ENCODE measurements at regions of chr2 and their contacts with region 1.

Region 1: GRCh38 chr2:8761529-8762164 is 75.8 kb downstream of the KIDINS220 start:
- DNase-seq: no peak
- H3K4me3 Mint-ChIP-seq: no peak overlapping the region
- H3K27ac Mint-ChIP-seq: no peak overlapping the region
- H3K4me1 Mint-ChIP-seq: peaks cover 3% of the 10 kb centered on the region
- H3K27me3 Mint-ChIP-seq: no peaks in the 10 kb centered on the region

Region 2: GRCh38 chr2:7097348-7097895 is 1664.2 kb before region 1 on chr2:
- intact Hi-C with region 1: loop called (anchors 5 kb)
- DNase-seq: peak; percentile 54
- H3K4me3 Mint-ChIP-seq: peak overlapping the region; percentile 33
- H3K27ac Mint-ChIP-seq: peak overlapping the region; percentile 0
- H3K4me1 Mint-ChIP-seq: peaks cover 8% of the 10 kb centered on the region
- H3K27me3 Mint-ChIP-seq: no peaks in the 10 kb centered on the region

Region 3: DNA sequence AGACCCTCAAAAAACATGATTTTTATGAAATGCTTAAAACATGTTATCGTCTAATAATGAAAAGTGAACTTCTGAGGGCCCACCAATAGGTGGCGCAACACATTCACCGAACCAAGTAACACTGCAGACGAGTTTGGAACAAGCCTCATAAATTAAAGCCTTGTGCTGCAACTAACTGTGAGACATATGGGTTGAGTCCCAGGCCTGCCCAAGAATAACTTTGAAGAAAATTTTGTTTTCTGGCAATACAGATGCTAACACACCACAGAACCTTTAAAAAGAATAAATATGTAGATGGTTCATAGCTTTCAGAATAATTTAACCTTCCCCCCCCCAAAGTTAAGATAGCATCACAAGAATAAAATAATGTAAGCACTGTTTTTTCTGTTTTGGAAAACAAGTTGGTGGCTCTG is 1558.6 kb before region 1 on chr2:
- intact Hi-C with region 1: loop called (anchors 5 kb)
- DNase-seq: peak; percentile 48
- H3K4me3 Mint-ChIP-seq: no peak overlapping the region
- H3K27ac Mint-ChIP-seq: no peak overlapping the region
- H3K4me1 Mint-ChIP-seq: peaks cover 7% of the 10 kb centered on the region
- H3K27me3 Mint-ChIP-seq: peaks cover 2% of the 10 kb centered on the region

Region 4: DNA sequence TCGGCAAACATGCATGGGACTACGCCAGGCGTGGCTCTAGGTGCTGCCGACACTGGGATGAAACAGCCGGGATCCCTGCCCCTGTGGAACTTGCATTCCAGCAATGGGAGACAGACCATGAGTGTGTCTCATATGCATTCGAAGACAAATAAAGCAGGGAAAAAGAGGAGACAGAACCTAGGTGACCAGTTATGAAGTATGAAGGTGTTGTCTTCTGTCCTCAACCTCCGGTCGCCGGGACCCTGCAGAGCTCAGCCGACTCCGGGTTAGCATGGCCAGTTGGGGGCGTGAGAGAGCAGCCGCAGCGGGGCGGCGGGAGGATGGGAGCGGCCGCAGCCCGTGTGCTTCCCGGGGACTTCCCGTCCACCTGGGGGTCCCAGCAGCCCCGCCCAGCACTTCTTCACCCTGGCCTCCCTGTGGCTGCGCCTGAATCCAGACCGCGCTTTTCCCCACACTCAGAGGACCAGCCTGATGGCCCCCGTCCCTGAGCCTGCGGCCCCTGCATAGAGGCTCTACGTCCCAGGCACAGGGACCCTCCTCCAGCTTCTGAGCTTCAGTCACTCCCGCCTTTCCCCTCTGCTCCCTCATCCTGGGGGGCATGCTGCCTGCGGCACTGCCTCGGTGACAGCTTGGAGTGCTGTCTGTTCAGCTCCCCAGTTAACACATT is 68.4 kb before region 1 on chr2:
- intact Hi-C with region 1: loop called (anchors 2 kb)
- DNase-seq: no peak
- H3K4me3 Mint-ChIP-seq: no peak overlapping the region
- H3K27ac Mint-ChIP-seq: no peak overlapping the region
- H3K4me1 Mint-ChIP-seq: peaks cover 3% of the 10 kb centered on the region
- H3K27me3 Mint-ChIP-seq: peaks cover 26% of the 10 kb centered on the region